CD8-positive, alpha-beta T cell (primary cell): ENCODE measurements at regions of chr6 and their contacts with region 1.

Region 1: GRCh38 chr6:14210663-14211561 is 93.3 kb downstream of the CD83 start:
- DNase-seq: peak; percentile 79 to 95 (median 85)
- ATAC-seq: peak; percentile 89
- H3K4me3 ChIP-seq: peak overlapping the region; percentile 52 to 78
- H3K4me3 Mint-ChIP-seq: peak overlapping the region; percentile 89
- H3K27ac ChIP-seq: peak overlapping the region; percentile 11 to 64
- H3K27ac Mint-ChIP-seq: peak overlapping the region; percentile 74
- H3K4me1 ChIP-seq: peaks cover 16% of the 10 kb centered on the region
- H3K4me1 Mint-ChIP-seq: peaks cover 14% of the 10 kb centered on the region
- H3K27me3 ChIP-seq: no peaks in the 10 kb centered on the region
- H3K27me3 Mint-ChIP-seq: no peaks in the 10 kb centered on the region
- CTCF ChIP-seq: peak; percentile 76

Region 2: GRCh38 chr6:14316635-14317386 is 105.9 kb after region 1 on chr6:
- CTCF ChIA-PET with region 1: interaction called, 15 read pairs
- POLR2A ChIA-PET with region 1: no interaction called
- intact Hi-C with region 1: loop called (anchors 2 to 5 kb)
- DNase-seq: peak in 3 of 9 experiments; percentile 7 to 20 (median 13)
- ATAC-seq: no peak
- H3K4me3 ChIP-seq: no peak overlapping the region
- H3K4me3 Mint-ChIP-seq: no peak overlapping the region
- H3K27ac ChIP-seq: no peak overlapping the region
- H3K27ac Mint-ChIP-seq: no peak overlapping the region
- H3K4me1 ChIP-seq: no peaks in the 10 kb centered on the region
- H3K4me1 Mint-ChIP-seq: peaks cover 3% of the 10 kb centered on the region
- H3K27me3 ChIP-seq: no peaks in the 10 kb centered on the region
- H3K27me3 Mint-ChIP-seq: peaks cover 2% of the 10 kb centered on the region
- CTCF ChIP-seq: no peak

Region 3: DNA sequence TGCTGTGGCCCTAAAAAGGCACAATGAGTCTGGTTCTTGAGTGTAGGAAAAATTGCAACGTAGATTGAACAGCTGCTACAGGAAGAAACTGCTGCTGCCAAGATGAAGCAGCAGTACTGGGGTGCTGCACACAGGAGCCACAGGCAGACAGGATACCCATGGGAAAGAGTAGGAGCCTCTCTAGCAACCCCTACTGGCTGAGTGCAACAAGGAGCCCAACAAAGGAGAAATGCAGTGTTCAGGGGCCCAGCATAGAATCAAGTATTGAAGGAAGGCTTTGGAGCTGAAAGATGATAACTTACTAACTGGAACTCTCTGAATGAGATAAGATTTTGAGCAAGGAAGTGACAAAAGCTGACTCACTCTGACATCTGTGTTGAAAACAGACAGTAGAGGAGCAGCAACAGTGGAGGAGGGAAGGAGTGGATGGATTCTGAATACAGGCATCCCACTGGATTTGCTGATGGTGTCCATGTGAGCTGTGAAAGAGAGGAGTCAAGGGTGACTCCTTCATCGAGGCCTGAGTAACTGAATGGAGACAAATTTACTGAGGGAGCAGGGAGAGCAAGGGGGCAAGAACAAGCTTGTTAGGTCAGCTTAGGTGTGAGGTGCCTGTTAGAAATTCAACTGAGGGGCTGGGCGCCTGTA is 500.3 kb after region 1 on chr6:
- CTCF ChIA-PET with region 1: interaction called, 16 read pairs
- POLR2A ChIA-PET with region 1: no interaction called
- intact Hi-C with region 1: loop called in 1 of 2 experiments (anchors 1 kb)
- DNase-seq: peak in 2 of 9 experiments; percentile 46 to 56
- ATAC-seq: peak; percentile 59
- H3K4me3 ChIP-seq: no peak overlapping the region
- H3K4me3 Mint-ChIP-seq: no peak overlapping the region
- H3K27ac ChIP-seq: no peak overlapping the region
- H3K27ac Mint-ChIP-seq: no peak overlapping the region
- H3K4me1 ChIP-seq: no peaks in the 10 kb centered on the region
- H3K4me1 Mint-ChIP-seq: peaks cover 3% of the 10 kb centered on the region
- H3K27me3 ChIP-seq: no peaks in the 10 kb centered on the region
- H3K27me3 Mint-ChIP-seq: no peaks in the 10 kb centered on the region
- CTCF ChIP-seq: peak; percentile 15

Region 4: DNA sequence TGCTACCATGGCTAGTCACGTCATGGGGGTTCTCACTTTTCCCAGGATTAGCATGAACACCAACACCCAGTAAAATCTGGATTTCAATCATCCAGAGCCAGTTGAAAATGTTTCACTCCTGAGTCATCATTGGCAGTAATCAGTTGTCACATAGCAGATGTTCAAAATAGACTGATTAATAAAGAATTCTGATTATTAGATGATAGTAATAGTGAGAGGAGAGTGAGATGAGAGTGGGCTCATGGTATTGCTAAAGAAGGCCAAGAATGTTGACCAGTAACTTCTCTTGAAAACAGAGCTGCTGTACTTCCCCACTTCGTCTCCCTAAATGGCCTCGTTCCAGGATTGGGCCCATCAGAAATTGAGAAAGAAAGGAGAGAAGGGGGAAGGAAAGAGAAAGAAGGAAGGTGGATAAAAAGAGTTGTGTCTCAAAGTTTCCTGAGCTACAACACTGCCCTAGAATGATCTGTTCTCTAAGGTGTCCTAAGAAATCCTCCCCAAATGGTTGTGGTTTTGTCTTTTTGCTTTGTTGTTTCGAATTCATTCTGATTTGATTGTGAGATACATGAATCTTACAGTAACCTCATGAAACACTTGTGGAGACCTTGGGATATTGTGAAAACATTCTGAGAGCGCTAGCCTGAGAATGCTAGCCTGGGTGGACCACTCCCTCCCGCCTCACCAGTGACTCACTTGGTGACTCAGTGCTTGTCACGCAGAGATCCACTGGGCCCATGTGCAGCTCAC is 532.7 kb after region 1 on chr6:
- CTCF ChIA-PET with region 1: no interaction called
- POLR2A ChIA-PET with region 1: no interaction called
- intact Hi-C with region 1: no loop called
- DNase-seq: peak in 7 of 9 experiments; percentile 19 to 60 (median 36)
- ATAC-seq: peak; percentile 73
- H3K4me3 ChIP-seq: no peak overlapping the region
- H3K4me3 Mint-ChIP-seq: no peak overlapping the region
- H3K27ac ChIP-seq: no peak overlapping the region
- H3K27ac Mint-ChIP-seq: no peak overlapping the region
- H3K4me1 ChIP-seq: peaks cover 4% of the 10 kb centered on the region
- H3K4me1 Mint-ChIP-seq: peaks cover 19% of the 10 kb centered on the region
- H3K27me3 ChIP-seq: no peaks in the 10 kb centered on the region
- H3K27me3 Mint-ChIP-seq: no peaks in the 10 kb centered on the region
- CTCF ChIP-seq: no peak

Region 5: DNA sequence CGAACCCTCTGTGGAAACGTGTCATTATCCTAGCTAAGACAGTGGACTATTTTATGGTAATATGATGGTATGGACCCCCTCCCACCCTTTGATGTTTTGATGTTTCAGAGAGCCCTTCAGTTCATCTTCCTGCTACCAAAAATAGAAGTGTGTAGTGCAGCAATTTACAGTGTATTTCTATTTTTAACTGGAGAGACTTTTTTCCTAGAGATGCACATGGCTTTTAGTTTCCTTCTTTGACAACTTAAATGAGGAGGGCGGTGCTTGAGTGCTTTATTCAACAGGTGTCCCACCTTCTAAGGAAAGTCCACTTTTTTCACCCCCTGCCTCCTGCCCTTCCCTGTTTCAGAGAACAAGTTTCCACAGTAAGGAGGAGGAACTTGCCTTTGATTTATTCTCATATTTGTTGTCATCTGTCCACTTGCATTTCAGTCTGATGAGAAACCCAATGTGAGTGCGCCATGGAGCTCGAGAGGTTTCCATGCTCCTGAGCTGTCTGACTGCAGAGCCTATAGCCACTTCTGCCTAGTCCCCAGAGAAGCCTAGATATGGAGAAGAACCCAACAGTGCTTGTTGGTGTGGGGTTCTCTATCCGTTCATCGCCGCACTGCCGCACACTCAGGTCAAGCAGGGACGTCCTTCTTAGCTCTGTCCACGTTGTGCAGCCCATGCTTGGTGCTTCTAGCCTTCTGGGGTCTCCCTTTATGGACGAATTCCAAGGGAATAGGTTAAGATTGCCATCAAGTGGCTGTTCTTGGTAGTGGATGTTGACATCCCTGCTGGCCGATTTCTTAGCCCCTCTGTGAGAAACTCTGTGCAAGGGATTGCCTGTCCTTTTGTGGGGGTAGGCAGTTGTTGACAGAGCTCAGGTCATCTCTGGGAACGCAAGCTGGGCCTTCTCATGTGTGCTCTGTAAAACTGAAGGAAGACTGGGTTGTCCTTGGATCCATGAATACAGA is 1179.1 kb after region 1 on chr6:
- CTCF ChIA-PET with region 1: no interaction called
- POLR2A ChIA-PET with region 1: no interaction called
- intact Hi-C with region 1: loop called (anchors 1 to 5 kb)
- DNase-seq: peak in 4 of 9 experiments; percentile 25 to 61 (median 38)
- ATAC-seq: peak; percentile 63
- H3K4me3 ChIP-seq: no peak overlapping the region
- H3K4me3 Mint-ChIP-seq: peak overlapping the region; percentile 3
- H3K27ac ChIP-seq: no peak overlapping the region
- H3K27ac Mint-ChIP-seq: no peak overlapping the region
- H3K4me1 ChIP-seq: peaks cover 27% of the 10 kb centered on the region
- H3K4me1 Mint-ChIP-seq: peaks cover 67% of the 10 kb centered on the region
- H3K27me3 ChIP-seq: no peaks in the 10 kb centered on the region
- H3K27me3 Mint-ChIP-seq: no peaks in the 10 kb centered on the region
- CTCF ChIP-seq: peak; percentile 65

Region 6: GRCh38 chr6:15491255-15491985 is 1280.5 kb after region 1 on chr6:
- CTCF ChIA-PET with region 1: no interaction called
- POLR2A ChIA-PET with region 1: no interaction called
- intact Hi-C with region 1: loop called (anchors 1 kb)
- DNase-seq: peak; percentile 49 to 80 (median 68)
- ATAC-seq: peak; percentile 89
- H3K4me3 ChIP-seq: no peak overlapping the region
- H3K4me3 Mint-ChIP-seq: no peak overlapping the region
- H3K27ac ChIP-seq: no peak overlapping the region
- H3K27ac Mint-ChIP-seq: peak overlapping the region; percentile 2
- H3K4me1 ChIP-seq: peaks cover 12% of the 10 kb centered on the region
- H3K4me1 Mint-ChIP-seq: peaks cover 40% of the 10 kb centered on the region
- H3K27me3 ChIP-seq: no peaks in the 10 kb centered on the region
- H3K27me3 Mint-ChIP-seq: no peaks in the 10 kb centered on the region
- CTCF ChIP-seq: peak; percentile 92